Left ventricle myocardium inferior (tissue), 1 donor: ENCODE measurements at regions of chr22 and their contacts with region 1.

Region 1: GRCh38 chr22:32103658-32104315 is 55.3 kb downstream of the C22orf42 start:
- DNase-seq: no peak
- H3K4me3 ChIP-seq: no peak overlapping the region
- H3K27ac ChIP-seq: no peak overlapping the region
- H3K4me1 ChIP-seq: peaks cover 3% of the 10 kb centered on the region
- H3K27me3 ChIP-seq: no peaks in the 10 kb centered on the region
- CTCF ChIP-seq: peak; percentile 45

Region 2: GRCh38 chr22:32005453-32005852 is 98.3 kb before region 1 on chr22:
- intact Hi-C with region 1: no loop called
- DNase-seq: no peak
- H3K4me3 ChIP-seq: no peak overlapping the region
- H3K27ac ChIP-seq: no peak overlapping the region
- H3K4me1 ChIP-seq: no peaks in the 10 kb centered on the region
- H3K27me3 ChIP-seq: peaks cover 8% of the 10 kb centered on the region
- CTCF ChIP-seq: no peak

Region 3: GRCh38 chr22:32222991-32223390 is 119.2 kb after region 1 on chr22:
- intact Hi-C with region 1: no loop called
- DNase-seq: no peak
- H3K4me3 ChIP-seq: no peak overlapping the region
- H3K27ac ChIP-seq: no peak overlapping the region
- H3K4me1 ChIP-seq: no peaks in the 10 kb centered on the region
- H3K27me3 ChIP-seq: peaks cover 5% of the 10 kb centered on the region
- CTCF ChIP-seq: no peak

Region 4: DNA sequence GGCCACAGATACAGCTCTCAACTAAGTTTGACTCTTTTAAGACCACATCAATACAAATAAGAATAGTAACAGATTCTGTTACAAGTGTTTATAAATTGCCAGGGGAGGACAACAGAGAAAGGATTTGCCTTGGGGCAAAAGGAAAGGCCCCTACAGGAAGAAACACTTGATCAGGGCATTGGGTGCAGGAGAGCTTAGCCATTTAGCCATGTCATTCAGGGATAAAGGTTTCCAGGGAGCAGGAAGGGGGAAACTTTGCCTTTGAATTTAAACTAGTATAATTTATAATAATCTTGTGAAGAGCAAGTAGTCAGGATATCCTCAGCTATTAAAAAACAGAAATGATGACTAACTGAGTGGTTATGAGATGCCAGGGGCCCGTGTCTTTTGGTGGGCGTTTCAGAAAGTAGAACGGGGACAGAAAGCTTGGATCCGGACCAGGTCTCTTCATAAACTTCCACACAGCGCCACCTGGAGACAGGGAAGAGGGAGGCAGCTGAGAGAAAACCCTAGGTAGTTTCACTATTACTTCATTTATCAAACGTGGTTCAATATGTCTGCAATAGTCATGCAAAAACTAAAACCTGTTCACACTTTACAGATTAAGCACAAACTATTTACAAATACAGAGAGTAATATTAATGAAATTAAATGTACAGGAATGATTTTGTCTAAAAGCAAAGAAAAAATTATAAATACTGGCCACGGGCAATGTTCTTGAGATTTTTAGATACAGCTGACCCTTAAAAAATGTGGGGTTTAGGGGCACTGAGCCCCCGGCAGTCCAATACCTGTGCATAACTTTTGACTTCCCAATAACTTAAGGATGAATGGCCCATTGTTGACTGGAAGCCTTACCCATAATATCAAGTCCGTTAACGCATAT is 162.3 kb after region 1 on chr22:
- intact Hi-C with region 1: loop called (anchors 5 kb)
- DNase-seq: peak; percentile 53
- H3K4me3 ChIP-seq: peak overlapping the region; percentile 42
- H3K27ac ChIP-seq: no peak overlapping the region
- H3K4me1 ChIP-seq: peaks cover 8% of the 10 kb centered on the region
- H3K27me3 ChIP-seq: peaks cover 9% of the 10 kb centered on the region
- CTCF ChIP-seq: peak; percentile 91